PC-3 (cell line): ENCODE measurements at regions of chr12 and their contacts with region 1.

Region 1: DNA sequence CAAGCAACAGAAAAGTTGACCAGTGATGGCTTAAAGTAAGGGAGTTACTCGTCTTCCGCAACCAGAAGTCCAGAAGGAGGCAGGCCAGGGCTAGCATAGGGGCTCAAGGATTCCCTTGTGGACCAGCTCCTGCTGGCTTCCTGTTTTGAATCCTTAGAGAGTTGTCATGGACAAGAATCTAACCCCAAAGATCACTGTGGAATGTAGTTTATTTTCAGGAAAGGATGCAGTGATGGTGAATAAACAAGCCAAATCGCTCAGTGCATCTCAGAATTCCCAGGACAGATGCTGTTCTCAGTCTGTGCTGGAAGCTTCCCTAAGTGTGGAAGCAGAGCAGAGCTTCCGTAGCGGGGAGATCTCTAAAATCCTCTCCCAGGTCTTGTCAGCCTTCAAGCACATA is 311.3 kb downstream of the C12orf75 start:
- DNase-seq: no peak
- ATAC-seq: no peak
- H3K4me3 ChIP-seq: no peak overlapping the region
- H3K27ac ChIP-seq: no peak overlapping the region
- H3K4me1 ChIP-seq: no peaks in the 10 kb centered on the region
- H3K27me3 ChIP-seq: no peaks in the 10 kb centered on the region
- CTCF ChIP-seq: no peak

Region 2: DNA sequence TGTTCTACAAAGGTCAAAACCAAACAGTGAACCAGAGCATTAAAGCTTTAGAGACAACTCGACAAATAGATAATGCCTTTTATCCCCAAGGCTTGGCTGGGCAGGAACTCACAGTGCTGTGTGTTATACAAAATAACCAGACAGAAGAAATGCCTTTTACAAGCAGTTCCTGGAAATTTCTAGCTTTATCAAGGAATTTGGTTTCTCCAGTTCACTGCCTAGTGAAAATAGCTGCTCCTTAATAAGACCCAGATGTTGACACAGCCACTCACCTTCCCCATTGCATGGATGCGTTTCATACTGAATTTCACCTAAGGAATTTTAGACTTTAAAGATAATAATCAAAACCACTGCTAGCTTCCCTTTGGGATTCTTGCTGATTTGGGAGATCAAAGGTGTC is 149.2 kb before region 1 on chr12:
- CTCF ChIA-PET with region 1: no interaction called
- POLR2A ChIA-PET with region 1: no interaction called
- intact Hi-C with region 1: no loop called
- DNase-seq: no peak
- ATAC-seq: no peak
- H3K4me3 ChIP-seq: no peak overlapping the region
- H3K27ac ChIP-seq: no peak overlapping the region
- H3K4me1 ChIP-seq: no peaks in the 10 kb centered on the region
- H3K27me3 ChIP-seq: no peaks in the 10 kb centered on the region
- CTCF ChIP-seq: no peak

Region 3: DNA sequence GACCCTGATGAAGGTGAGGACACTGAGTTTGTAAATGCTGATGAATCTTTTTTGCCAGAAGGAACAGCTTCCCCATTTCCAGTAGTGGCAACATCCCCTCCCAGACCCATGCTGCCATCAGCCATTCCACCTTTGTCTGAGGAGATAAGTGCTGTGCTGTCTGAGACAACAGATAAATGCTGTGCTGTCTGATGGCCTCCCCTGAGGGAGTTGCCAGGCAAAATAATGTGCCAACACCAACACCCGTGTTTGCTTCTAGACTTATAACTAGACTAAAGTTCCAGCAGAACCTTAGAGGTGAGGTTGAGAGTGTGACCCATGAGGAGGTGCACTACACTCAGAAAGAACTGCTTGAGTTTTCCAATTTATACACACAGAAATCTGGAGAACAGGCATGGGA is 38.2 kb after region 1 on chr12:
- CTCF ChIA-PET with region 1: no interaction called
- POLR2A ChIA-PET with region 1: no interaction called
- intact Hi-C with region 1: loop called (anchors 1 kb)
- DNase-seq: no peak
- ATAC-seq: no peak
- H3K4me3 ChIP-seq: no peak overlapping the region
- H3K27ac ChIP-seq: no peak overlapping the region
- H3K4me1 ChIP-seq: no peaks in the 10 kb centered on the region
- H3K27me3 ChIP-seq: no peaks in the 10 kb centered on the region
- CTCF ChIP-seq: no peak